ENCODE measurements at regions of chr11 and their contacts with region 1.

Region 1: GRCh38 chr11:12159351-12160099 is 49.1 kb downstream of the MICAL2 start:
- DNase-seq: no peak
- H3K4me3 Mint-ChIP-seq: no peak overlapping the region
- H3K27ac Mint-ChIP-seq: peak overlapping the region; percentile 88
- H3K4me1 Mint-ChIP-seq: peaks cover 60% of the 10 kb centered on the region
- H3K27me3 Mint-ChIP-seq: no peaks in the 10 kb centered on the region
- CTCF ChIP-seq: no peak

Region 2: DNA sequence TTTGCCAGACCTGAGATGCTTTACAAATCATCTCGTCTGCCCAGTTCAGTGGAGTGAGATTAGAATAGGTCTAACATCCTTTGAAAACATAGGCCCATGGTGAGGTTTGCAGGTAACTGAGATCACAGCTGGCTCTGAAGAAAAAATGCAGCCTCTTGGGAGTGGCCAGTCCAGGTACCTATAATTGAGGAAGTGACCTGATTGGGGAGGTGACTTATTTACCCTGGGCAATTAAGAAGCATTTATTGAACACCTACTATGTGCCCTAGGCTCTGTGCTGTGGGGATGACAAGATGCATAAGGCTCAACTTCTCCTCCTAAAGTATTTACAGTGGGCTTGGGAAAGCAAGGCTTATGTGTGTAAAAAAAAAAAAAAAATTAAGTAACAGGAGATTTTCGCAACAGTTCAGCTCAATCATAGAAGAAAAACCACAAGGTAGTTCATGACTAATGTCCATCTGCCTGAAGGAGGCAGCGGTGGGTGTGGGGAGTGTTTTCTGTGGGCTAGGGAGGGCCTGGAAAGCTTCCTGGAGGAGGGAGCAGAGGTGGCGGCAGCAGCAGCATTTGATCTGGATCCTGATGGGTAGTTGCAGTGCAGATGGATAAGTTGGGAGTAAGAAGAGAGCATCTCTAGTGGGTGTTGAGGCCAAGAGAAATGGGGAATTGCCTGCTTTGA is 33.0 kb before region 1 on chr11:
- CTCF ChIA-PET with region 1: interaction called, 7 read pairs
- intact Hi-C with region 1: loop called (anchors 5 kb)
- DNase-seq: peak; percentile 61
- H3K4me3 Mint-ChIP-seq: peak overlapping the region; percentile 8
- H3K27ac Mint-ChIP-seq: peak overlapping the region; percentile 90
- H3K4me1 Mint-ChIP-seq: peaks cover 61% of the 10 kb centered on the region
- H3K27me3 Mint-ChIP-seq: no peaks in the 10 kb centered on the region
- CTCF ChIP-seq: no peak

Region 3: DNA sequence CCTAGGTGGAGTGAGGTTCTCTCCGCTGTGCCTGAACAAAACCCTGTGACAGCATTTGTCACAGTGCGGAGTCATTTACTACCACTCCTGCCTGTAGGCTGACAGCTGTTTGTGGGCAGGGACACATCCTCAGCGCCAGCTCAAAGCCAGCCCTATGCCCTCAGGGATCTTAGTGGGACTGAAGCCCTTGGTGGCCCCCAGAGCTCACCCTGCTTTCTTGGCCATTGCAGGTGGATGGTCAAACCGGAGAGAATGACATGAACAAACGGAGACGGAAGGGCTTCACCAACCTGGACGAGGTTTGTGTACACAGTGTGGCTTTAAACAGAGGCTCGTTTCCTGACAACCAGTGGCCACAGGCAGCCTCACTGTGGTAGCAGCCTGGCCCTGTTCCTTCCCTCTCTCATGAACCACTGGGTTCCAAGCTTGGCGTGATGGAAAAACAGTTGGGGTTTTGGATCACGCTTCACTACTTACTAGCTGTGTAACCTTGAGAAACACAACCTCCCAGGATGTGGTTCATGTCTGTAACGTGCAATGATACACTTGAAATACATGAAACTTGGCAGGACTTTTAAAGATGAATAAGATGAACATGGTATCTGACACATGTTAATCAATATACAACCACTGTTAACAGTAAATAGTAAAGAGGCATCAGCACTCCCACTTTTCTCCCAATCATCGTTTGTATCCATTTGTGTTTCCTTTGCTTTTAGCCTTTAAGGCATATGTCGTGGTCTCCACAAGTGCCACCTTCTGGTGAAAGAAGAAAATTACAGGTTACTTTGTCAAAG is 76.6 kb after region 1 on chr11:
- CTCF ChIA-PET with region 1: no interaction called
- intact Hi-C with region 1: loop called (anchors 1 kb)
- DNase-seq: no peak
- H3K4me3 Mint-ChIP-seq: no peak overlapping the region
- H3K27ac Mint-ChIP-seq: no peak overlapping the region
- H3K4me1 Mint-ChIP-seq: peaks cover 7% of the 10 kb centered on the region
- H3K27me3 Mint-ChIP-seq: no peaks in the 10 kb centered on the region
- CTCF ChIP-seq: peak; percentile 55

Region 4: DNA sequence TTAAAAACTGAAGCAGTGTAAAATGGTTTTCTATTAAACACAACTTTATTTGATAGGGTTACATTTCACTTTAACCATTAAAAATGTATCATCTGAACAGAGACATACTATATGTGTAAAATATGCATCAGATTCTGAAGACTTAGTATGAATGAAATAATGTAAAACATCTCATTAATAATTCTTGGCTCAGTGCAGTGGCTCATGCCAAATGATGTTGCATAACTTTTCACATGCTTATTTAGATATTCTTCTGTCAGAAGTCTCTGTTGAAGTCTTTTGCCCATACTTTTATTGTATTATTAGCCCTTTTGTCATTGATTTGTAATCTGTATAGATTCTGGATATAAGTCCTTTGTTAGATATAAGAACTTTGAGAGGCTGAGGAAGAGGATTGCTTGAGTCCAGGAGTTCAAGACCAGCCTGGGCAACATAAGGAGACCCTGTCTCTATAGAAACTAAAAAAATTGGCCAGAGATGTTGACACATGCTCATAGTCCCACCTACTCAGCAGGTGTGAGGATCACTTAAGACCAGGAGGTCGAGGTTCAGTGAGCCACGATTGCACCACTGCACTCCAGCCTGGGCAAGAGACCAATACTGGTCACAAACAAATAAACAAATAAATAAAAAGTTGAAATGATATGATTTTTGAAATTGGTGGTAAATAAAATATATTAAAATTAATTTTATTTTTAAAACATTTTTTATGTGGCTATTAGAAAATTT is 144.1 kb after region 1 on chr11:
- CTCF ChIA-PET with region 1: no interaction called
- intact Hi-C with region 1: no loop called
- DNase-seq: no peak
- H3K4me3 Mint-ChIP-seq: no peak overlapping the region
- H3K27ac Mint-ChIP-seq: no peak overlapping the region
- H3K4me1 Mint-ChIP-seq: no peaks in the 10 kb centered on the region
- H3K27me3 Mint-ChIP-seq: no peaks in the 10 kb centered on the region
- CTCF ChIP-seq: no peak